ENCODE measurements at regions of chr3 and their contacts with region 1.

Region 1: GRCh38 chr3:141192345-141192744 is 39.3 kb upstream of the PXYLP1 start:
- DNase-seq: peak; percentile 91 to 93 (median 91)
- H3K4me3 ChIP-seq: no peak overlapping the region
- H3K4me3 Mint-ChIP-seq: no peak overlapping the region
- H3K27ac ChIP-seq: no peak overlapping the region
- H3K27ac Mint-ChIP-seq: peak overlapping the region in 5 of 7 donors; percentile 2 to 78 (median 33)
- H3K4me1 ChIP-seq: peaks cover 6% of the 10 kb centered on the region
- H3K4me1 Mint-ChIP-seq: peaks cover 5 to 14% (median 9%) of the 10 kb centered on the region in 4 donors
- H3K27me3 ChIP-seq: no peaks in the 10 kb centered on the region
- H3K27me3 Mint-ChIP-seq: peaks cover 13 to 14% of the 10 kb centered on the region in 2 donors

Region 2: DNA sequence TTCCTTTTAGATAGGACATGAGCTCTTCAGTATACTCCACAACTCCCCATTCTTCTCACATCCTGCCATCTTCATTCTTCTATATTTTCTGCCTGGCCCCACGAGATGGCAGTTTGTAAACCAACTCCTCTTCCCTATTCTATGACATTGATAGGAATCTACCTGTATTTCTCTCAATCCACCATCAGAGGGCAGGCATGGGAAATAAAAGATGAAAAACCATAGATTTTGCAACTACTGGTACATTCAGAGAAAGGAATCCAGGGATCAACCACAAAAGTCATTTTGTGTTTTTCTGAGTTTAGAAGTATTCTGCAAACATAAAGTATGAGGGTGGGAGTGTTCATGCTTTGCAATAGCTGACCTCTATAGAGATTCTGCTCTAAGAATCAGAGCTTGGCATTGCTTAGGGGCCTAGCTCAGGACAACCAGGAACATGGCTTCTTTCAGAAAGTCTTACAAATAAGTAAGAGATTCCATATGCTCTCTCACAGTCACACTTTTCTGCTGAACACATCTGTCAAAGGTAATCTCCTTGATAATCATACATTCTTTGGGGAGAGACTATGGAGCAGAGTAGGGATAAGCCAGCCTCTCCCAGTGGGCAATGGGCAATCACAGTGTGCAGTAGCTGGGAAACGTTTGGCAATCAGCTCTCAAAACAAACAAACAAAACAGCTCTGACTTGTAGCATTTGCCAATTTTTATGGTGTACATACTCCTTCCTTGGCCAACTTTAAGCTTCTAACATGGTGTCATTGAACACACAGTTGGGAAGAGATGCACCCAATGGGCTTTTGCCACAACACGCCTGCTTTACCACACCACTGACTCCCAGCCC is 293.8 kb before region 1 on chr3:
- CTCF ChIA-PET with region 1: interaction called, 35 read pairs
- POLR2A ChIA-PET with region 1: no interaction called
- intact Hi-C with region 1: no loop called
- DNase-seq: peak in 4 of 5 donors; percentile 28 to 43 (median 34)
- H3K4me3 ChIP-seq: no peak overlapping the region
- H3K4me3 Mint-ChIP-seq: no peak overlapping the region
- H3K27ac ChIP-seq: no peak overlapping the region
- H3K27ac Mint-ChIP-seq: no peak overlapping the region
- H3K4me1 ChIP-seq: no peaks in the 10 kb centered on the region
- H3K4me1 Mint-ChIP-seq: peaks cover 0 to 2% (median 0%) of the 10 kb centered on the region in 4 donors
- H3K27me3 ChIP-seq: no peaks in the 10 kb centered on the region
- H3K27me3 Mint-ChIP-seq: peaks cover 18 to 21% of the 10 kb centered on the region in 2 donors

Region 3: GRCh38 chr3:140922634-140923033 is 269.7 kb before region 1 on chr3:
- CTCF ChIA-PET with region 1: interaction called, 3 read pairs
- POLR2A ChIA-PET with region 1: no interaction called
- intact Hi-C with region 1: loop called (anchors 10 kb)
- DNase-seq: no peak
- H3K4me3 ChIP-seq: no peak overlapping the region
- H3K4me3 Mint-ChIP-seq: no peak overlapping the region
- H3K27ac ChIP-seq: no peak overlapping the region
- H3K27ac Mint-ChIP-seq: no peak overlapping the region
- H3K4me1 ChIP-seq: no peaks in the 10 kb centered on the region
- H3K4me1 Mint-ChIP-seq: no peaks in the 10 kb centered on the region
- H3K27me3 ChIP-seq: peaks cover 1% of the 10 kb centered on the region
- H3K27me3 Mint-ChIP-seq: peaks cover 5 to 17% of the 10 kb centered on the region in 2 donors

Region 4: DNA sequence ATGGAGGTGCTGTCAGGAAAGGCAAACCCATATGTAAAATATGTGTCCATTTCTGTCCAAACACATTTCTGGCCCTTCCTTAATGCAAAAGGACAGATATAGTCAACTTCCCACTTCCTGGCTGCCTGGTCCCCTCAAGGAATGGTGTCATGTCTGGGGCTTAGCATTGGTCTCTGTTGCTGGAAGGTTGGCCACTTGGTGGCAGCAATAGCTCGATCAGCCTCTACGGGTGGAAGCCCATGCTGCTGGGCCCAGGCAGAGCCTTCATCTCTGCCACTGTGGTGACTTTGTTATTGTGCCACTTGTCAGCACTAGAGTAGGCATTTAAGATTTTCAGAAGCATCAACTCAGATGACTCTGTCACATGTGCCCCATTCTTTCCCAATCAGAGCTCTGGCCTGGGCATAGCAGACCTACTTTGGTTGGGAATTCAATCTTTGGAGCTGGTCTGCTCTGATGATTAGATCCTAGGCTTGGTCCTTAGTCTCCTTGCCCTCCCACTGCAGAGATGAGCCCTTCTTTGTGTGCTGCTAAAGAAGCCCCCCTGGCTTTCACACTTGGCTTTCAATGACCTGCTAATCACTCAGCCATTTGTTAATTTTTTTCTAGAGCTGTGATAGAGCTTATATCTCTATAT is 192.2 kb before region 1 on chr3:
- CTCF ChIA-PET with region 1: interaction called, 28 read pairs
- POLR2A ChIA-PET with region 1: interaction called, 3 read pairs
- intact Hi-C with region 1: loop called (anchors 1 kb)
- DNase-seq: peak; percentile 24 to 50 (median 30)
- H3K4me3 ChIP-seq: no peak overlapping the region
- H3K4me3 Mint-ChIP-seq: no peak overlapping the region
- H3K27ac ChIP-seq: no peak overlapping the region
- H3K27ac Mint-ChIP-seq: no peak overlapping the region
- H3K4me1 ChIP-seq: no peaks in the 10 kb centered on the region
- H3K4me1 Mint-ChIP-seq: peaks cover 0 to 2% (median 0%) of the 10 kb centered on the region in 4 donors
- H3K27me3 ChIP-seq: no peaks in the 10 kb centered on the region
- H3K27me3 Mint-ChIP-seq: peaks cover 3 to 8% of the 10 kb centered on the region in 2 donors

Region 5: GRCh38 chr3:141011232-141011996 is 180.9 kb before region 1 on chr3:
- CTCF ChIA-PET with region 1: interaction called, 19 read pairs
- POLR2A ChIA-PET with region 1: no interaction called
- intact Hi-C with region 1: loop called (anchors 1 kb)
- DNase-seq: peak; percentile 51 to 62 (median 58)
- H3K4me3 ChIP-seq: no peak overlapping the region
- H3K4me3 Mint-ChIP-seq: no peak overlapping the region
- H3K27ac ChIP-seq: no peak overlapping the region
- H3K27ac Mint-ChIP-seq: peak overlapping the region in 1 of 7 donors; percentile 60
- H3K4me1 ChIP-seq: no peaks in the 10 kb centered on the region
- H3K4me1 Mint-ChIP-seq: peaks cover 1 to 4% (median 4%) of the 10 kb centered on the region in 4 donors
- H3K27me3 ChIP-seq: no peaks in the 10 kb centered on the region
- H3K27me3 Mint-ChIP-seq: peaks cover 9 to 19% of the 10 kb centered on the region in 2 donors

Region 6: GRCh38 chr3:141030296-141030695 is 162.0 kb before region 1 on chr3:
- CTCF ChIA-PET with region 1: no interaction called
- POLR2A ChIA-PET with region 1: no interaction called
- intact Hi-C with region 1: no loop called
- DNase-seq: no peak
- H3K4me3 ChIP-seq: no peak overlapping the region
- H3K4me3 Mint-ChIP-seq: no peak overlapping the region
- H3K27ac ChIP-seq: no peak overlapping the region
- H3K27ac Mint-ChIP-seq: no peak overlapping the region
- H3K4me1 ChIP-seq: no peaks in the 10 kb centered on the region
- H3K4me1 Mint-ChIP-seq: no peaks in the 10 kb centered on the region
- H3K27me3 ChIP-seq: no peaks in the 10 kb centered on the region
- H3K27me3 Mint-ChIP-seq: peaks cover 3 to 15% of the 10 kb centered on the region in 2 donors

Region 7: GRCh38 chr3:141105828-141106628 is 86.3 kb before region 1 on chr3:
- CTCF ChIA-PET with region 1: interaction called, 4 read pairs
- POLR2A ChIA-PET with region 1: no interaction called
- intact Hi-C with region 1: loop called (anchors 1 kb)
- DNase-seq: peak; percentile 39 to 61 (median 47)
- H3K4me3 ChIP-seq: no peak overlapping the region
- H3K4me3 Mint-ChIP-seq: no peak overlapping the region
- H3K27ac ChIP-seq: no peak overlapping the region
- H3K27ac Mint-ChIP-seq: no peak overlapping the region
- H3K4me1 ChIP-seq: no peaks in the 10 kb centered on the region
- H3K4me1 Mint-ChIP-seq: no peaks in the 10 kb centered on the region
- H3K27me3 ChIP-seq: no peaks in the 10 kb centered on the region
- H3K27me3 Mint-ChIP-seq: peaks cover 2% of the 10 kb centered on the region in 2 donors

Region 8: GRCh38 chr3:141255846-141256261 is 63.5 kb after region 1 on chr3:
- CTCF ChIA-PET with region 1: interaction called, 7 read pairs
- POLR2A ChIA-PET with region 1: no interaction called
- intact Hi-C with region 1: loop called (anchors 2 kb)
- DNase-seq: peak; percentile 55 to 62 (median 56)
- H3K4me3 ChIP-seq: no peak overlapping the region
- H3K4me3 Mint-ChIP-seq: peak overlapping the region in 4 of 8 donors; percentile 5 to 58 (median 12)
- H3K27ac ChIP-seq: no peak overlapping the region
- H3K27ac Mint-ChIP-seq: peak overlapping the region in 6 of 7 donors; percentile 2 to 77 (median 32)
- H3K4me1 ChIP-seq: no peaks in the 10 kb centered on the region
- H3K4me1 Mint-ChIP-seq: peaks cover 11 to 15% (median 12%) of the 10 kb centered on the region in 4 donors
- H3K27me3 ChIP-seq: no peaks in the 10 kb centered on the region
- H3K27me3 Mint-ChIP-seq: no peaks in the 10 kb centered on the region

Measured in CD4-positive, alpha-beta memory T cell (primary cell).